Cardiac septum (tissue), 1 donor: ENCODE measurements at regions of chr3 and their contacts with region 1.

Region 1: GRCh38 chr3:178454726-178455125 is 81.5 kb upstream of the KCNMB2 start:
- DNase-seq: peak; percentile 82

Region 2: DNA sequence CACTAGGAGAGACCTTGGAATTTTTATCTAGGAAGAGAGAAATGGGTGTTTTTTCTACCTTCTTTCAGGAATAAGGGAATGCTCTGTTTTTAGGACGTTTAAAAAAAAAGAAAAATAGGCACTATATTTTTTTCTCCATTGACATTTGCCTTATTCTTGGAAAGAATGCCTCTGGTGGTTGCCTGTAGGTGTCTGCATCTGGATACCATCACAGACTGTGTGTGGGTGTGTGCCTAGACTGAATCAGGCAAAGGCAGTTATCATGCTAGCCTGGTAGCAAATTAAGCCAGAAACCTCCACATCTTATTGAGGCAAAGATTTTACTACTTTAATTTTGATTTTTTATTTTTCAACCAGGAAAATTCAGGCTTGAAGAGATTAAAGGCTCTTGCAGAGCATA is 432.1 kb before region 1 on chr3:
- intact Hi-C with region 1: no loop called
- DNase-seq: no peak

Region 3: GRCh38 chr3:178419071-178419470 is 35.7 kb before region 1 on chr3:
- intact Hi-C with region 1: no loop called
- DNase-seq: no peak

Region 4: GRCh38 chr3:178663201-178663934 is 208.6 kb after region 1 on chr3:
- intact Hi-C with region 1: loop called (anchors 5 kb)
- DNase-seq: no peak

Region 5: DNA sequence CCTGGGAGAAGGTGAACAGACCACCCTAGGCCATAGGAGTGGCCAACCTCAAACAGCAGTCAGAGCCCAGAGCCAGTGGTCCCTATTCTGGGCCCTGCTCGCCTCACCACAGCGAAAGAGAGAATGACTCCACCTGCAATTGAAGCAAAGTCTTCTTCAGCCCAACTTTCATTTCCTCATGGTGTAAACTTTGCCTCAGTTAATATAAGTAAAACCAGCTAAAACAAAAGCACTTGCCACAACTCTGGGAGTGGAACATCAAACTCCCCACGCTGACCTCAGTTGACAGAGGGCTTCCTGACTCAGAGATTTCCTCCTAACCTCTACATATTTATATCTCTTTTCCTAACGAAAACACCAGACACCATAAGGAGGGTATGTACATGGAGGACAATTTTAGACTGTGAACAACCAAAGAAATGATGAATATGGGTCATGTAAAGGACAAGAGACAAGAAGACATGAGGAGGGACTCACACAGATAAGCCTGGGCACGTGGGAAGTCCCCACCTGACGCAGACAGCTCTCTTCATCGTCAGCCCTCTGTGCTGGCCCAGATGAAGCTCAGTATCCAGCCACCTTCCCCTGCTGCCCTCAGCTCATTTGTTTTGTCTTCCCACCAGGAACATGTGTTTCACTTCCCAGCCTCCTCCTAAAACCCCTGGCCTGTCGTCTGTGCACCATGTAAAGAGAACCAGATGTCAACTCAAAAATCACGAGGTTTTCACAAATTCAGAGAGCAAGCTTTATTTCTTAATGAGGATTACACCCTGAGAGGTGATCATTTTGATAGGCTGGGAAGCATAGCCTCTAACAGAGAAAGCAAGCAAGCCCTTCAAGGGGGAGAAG is 222.4 kb after region 1 on chr3:
- intact Hi-C with region 1: loop called (anchors 5 kb)
- DNase-seq: no peak